Psoas muscle (tissue), 8 donors: ENCODE measurements at regions of chr9 and their contacts with region 1.

Region 1: GRCh38 chr9:69919461-69920061 is 98.9 kb downstream of the CFAP95 start:
- DNase-seq: no peak
- ATAC-seq: peak; percentile 44 to 84 (median 69)
- H3K4me3 ChIP-seq: no peak overlapping the region
- H3K27ac ChIP-seq: no peak overlapping the region
- H3K4me1 ChIP-seq: no peaks in the 10 kb centered on the region
- H3K27me3 ChIP-seq: no peaks in the 10 kb centered on the region
- CTCF ChIP-seq: peak; percentile 68

Region 2: GRCh38 chr9:70043689-70044489 is 124.3 kb after region 1 on chr9 and contains the start of gene MAMDC2:
- intact Hi-C with region 1: loop called in 1 of 2 experiments (anchors 1 kb)
- DNase-seq: peak; percentile 72 to 80
- ATAC-seq: peak; percentile 73 to 84 (median 77)
- H3K4me3 ChIP-seq: peak within 1 kb of the TSS; percentile 74
- H3K27ac ChIP-seq: peak within 1 kb of the TSS; percentile 54
- H3K4me1 ChIP-seq: peaks cover 8% of the 10 kb centered on the region
- H3K27me3 ChIP-seq: peaks cover 0 to 1% (median 0%) of the 10 kb centered on the region in 3 donors
- CTCF ChIP-seq: no peak
- total RNA-seq, gene MAMDC2: 0.91 to 11.9 (median 2.9) TPM